ENCODE measurements at regions of chr20 and their contacts with region 1.

Region 1: DNA sequence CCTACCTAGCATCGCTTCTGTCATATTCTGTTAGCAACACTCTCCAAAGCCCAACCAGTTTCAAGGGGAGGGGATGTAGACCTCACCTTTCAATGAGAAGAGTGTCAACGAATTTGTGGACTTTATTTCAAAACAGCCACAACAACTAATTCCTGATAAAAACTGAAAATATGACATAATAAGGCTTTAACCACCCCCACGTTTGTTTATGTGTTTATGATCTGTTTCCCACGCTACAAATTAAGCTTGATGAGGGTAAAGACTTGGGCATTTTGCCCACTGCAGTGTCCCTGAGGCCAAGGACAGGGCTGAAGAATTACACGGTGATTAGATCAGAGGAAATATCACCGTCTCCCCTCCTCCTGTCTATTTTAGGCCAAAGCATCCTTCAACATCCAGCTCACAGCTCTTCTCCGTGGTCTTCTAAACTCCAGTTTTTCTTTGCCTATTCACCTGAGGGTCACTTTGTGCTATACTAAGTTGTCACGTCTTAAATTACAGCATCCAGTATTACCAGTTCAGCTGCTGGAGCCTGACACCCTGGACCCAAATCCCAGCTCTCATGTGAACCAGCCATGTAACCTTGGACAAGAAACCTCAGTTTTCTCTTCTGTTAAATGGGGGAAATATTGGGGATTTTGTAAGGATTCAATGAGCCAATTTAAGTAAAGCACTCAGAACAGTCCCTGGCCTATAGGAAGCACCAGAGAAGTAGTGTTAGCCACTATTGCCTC is 15.2 kb upstream of the ARFGEF2 start:
- DNase-seq: no peak
- H3K4me3 ChIP-seq: no peak overlapping the region
- H3K27ac ChIP-seq: no peak overlapping the region
- H3K4me1 ChIP-seq: peaks cover 0 to 8% (median 6%) of the 10 kb centered on the region in 4 donors
- H3K27me3 ChIP-seq: peaks cover 0 to 9% (median 0%) of the 10 kb centered on the region in 3 donors
- CTCF ChIP-seq: no peak
- EP300 ChIP-seq: no peak
- POLR2A ChIP-seq: no peak

Region 2: DNA sequence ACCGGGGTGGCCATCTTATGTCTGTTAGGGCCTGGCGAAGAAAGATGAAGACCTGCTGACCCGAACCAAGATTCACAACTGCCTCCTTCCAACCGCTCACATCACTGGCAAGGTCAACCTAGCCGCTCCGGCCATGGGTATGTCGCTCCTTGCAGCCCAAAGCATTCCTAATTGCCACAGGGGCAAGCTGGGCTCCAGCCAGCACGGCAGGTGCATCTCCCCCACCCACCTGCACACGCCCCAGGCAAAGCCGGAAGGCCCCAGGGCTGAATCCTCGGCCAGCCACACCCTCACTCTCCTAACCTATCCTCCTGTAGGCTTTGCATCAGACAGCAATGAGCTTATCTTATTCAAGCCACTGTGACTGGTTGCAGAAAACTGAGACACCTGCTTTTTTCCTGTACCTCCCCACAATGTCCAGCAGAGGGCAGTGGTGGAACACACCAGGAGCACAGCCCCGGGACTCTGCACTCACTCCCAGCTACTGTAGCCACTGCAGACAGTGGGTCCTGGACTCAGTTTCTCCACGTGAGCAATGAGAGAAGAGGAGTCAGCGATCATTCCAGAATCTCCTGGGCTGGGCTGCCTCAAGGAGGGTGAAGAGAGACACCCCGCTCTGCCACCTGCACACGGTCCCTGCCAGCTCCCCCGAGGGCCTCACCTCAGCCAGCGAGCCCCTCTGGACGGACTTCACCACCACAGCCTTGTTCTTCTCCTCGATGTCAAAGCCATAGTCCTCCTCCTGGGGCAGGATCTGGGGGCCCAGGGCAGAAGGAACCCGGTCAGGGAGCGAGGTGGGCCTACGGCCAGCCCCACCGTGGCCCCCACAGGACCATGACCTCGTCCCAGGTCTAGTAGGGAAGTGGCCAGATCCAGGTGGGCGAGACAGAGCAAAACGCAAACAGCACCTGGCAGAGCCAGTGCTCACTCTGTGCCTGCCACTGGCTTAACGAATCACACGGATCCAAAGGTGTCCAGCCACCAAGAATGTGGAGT is 248.5 kb before region 1 on chr20:
- intact Hi-C with region 1: loop called (anchors 2 kb)
- DNase-seq: peak; percentile 78 to 93
- H3K4me3 ChIP-seq: no peak overlapping the region
- H3K27ac ChIP-seq: no peak overlapping the region
- H3K4me1 ChIP-seq: peaks cover 0 to 30% (median 14%) of the 10 kb centered on the region in 4 donors
- H3K27me3 ChIP-seq: no peaks in the 10 kb centered on the region
- CTCF ChIP-seq: peak in 6 of 7 experiments; percentile 79 to 97 (median 94)
- EP300 ChIP-seq: no peak
- POLR2A ChIP-seq: no peak